Sciatic nerve (tissue), 2 donors: ENCODE measurements at regions of chr16 and their contacts with region 1.

Region 1: DNA sequence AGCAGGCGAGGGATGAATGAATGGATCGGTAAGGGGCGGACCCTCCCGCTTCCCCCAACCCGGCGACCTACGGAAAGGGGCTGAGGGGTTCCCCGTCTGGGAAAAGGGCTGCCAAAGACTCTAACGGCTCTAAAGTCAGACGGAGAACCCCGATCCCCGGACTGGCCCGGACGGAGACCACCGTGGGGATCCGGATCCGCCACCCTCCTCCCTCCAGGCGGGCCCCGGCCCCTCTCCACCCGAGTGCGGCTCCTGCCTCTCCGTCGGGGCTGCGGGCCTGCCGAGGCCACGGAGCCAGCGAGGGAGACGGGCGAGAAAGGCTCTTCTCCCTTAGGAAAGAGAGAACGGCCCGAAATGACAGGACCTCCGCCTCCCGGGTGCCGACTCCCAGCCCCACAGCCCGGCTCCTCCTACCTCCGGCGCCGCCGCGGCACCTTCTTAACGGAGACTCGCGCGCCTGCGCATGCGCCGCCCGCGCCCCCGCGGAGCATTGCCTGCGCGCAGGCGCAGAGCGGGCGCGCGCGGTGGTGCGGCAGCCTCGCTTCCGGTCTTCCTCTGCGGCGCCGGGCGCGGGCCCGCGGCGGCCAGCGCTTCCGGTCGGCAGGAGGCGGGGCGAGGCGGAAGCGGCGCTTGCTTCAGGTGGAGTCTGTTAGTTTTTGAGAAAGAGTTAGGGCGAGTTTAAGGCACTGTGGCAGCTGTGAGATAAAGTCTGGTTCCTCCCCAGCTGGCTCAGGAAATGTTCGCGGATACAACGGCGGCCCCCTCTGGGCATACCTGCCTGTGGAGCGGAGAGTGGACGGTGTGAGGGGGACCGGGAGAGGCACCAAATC is at the start of gene SLX4:
- DNase-seq: peak; percentile 93
- ATAC-seq: peak; percentile 97
- total RNA-seq, gene SLX4: 6.5 TPM

Region 2: GRCh38 chr16:3087243-3088235 is 523.8 kb before region 1 on chr16:
- intact Hi-C with region 1: loop called (anchors 10 kb)
- DNase-seq: no peak
- ATAC-seq: peak; percentile 41

Region 3: GRCh38 chr16:3654249-3654991 is 43.1 kb after region 1 on chr16 and contains the start of gene DNASE1:
- intact Hi-C with region 1: no loop called
- DNase-seq: peak; percentile 75
- ATAC-seq: peak; percentile 69
- total RNA-seq, gene DNASE1: 24.7 TPM